ENCODE measurements at regions of chr5 and their contacts with region 1.

Region 1: GRCh38 chr5:15510831-15511230 is 10.9 kb downstream of the FBXL7 start:
- DNase-seq: no peak
- H3K4me3 ChIP-seq: no peak overlapping the region
- CTCF ChIP-seq: no peak

Region 2: DNA sequence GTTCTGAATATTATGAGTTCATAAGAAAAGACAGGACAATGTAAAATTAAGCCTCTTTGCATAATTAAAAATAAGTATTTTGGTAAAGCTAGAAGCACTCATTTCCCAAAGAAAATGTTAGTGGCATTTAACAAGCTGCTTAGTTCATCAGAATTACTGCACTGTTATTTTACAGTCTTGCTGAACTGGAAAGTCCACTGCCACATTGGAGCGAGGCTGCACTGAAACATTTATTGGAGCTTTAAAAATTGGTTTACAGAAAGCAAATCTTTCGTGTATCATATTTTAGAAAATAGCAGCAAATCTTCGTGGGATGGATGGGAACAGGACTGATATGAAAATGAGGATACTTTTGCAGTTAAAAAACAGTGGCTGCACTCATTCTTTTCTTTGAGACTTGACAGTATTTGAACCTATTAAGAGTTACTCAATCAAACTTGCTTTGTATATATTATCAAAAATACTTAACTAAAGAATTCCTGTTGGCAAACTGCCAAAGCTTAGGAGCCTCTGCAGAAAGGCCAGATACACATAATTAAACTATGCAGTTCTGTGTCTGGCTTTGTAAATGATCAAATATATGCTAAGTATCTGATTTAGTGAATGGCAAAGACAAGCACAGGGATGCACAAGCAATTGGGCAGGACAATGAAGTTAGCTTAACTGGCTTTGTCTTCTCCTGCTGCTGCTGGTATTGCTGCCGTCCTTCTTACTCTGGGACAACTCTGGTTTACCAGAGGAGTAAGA is 27.3 kb before region 1 on chr5:
- CTCF ChIA-PET with region 1: no interaction called
- POLR2A ChIA-PET with region 1: no interaction called
- DNase-seq: no peak
- H3K4me3 ChIP-seq: no peak overlapping the region
- CTCF ChIP-seq: no peak

Region 3: GRCh38 chr5:15521381-15522174 is 10.7 kb after region 1 on chr5:
- CTCF ChIA-PET with region 1: interaction called, 11 read pairs
- POLR2A ChIA-PET with region 1: no interaction called
- DNase-seq: no peak
- H3K4me3 ChIP-seq: peak overlapping the region; percentile 13
- CTCF ChIP-seq: no peak

Region 4: GRCh38 chr5:15702102-15702501 is 191.3 kb after region 1 on chr5:
- CTCF ChIA-PET with region 1: no interaction called
- POLR2A ChIA-PET with region 1: no interaction called
- DNase-seq: no peak
- H3K4me3 ChIP-seq: no peak overlapping the region
- CTCF ChIP-seq: no peak

Region 5: GRCh38 chr5:15877914-15878313 is 367.1 kb after region 1 on chr5:
- CTCF ChIA-PET with region 1: no interaction called
- POLR2A ChIA-PET with region 1: no interaction called
- DNase-seq: no peak
- H3K4me3 ChIP-seq: no peak overlapping the region
- CTCF ChIP-seq: no peak